ENCODE measurements at regions of chr6 and their contacts with region 1.

Region 1: DNA sequence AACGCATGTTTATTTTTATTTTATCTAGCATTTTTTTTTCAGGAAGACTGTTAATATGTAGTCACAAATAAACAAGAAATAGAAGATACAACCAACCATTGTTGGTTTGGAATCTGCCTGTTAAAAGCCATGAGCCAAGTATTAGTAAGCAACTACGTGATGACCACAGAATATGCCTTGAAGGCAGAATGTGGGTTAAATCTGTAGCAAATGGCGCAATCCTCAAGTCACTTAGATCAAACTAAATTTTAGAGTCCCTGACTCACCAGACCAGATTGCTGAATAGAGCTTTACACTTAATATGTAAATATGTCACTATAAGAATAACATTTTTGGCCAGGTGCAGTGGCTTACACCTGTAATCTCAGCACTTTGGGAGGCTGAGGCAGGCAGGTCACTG is 800.1 kb upstream of the CITED2 start:
- DNase-seq: peak; percentile 88
- H3K4me3 ChIP-seq: no peak overlapping the region
- H3K27ac ChIP-seq: no peak overlapping the region
- H3K27me3 ChIP-seq: no peaks in the 10 kb centered on the region
- CTCF ChIP-seq: no peak

Region 2: GRCh38 chr6:140052756-140053729 is 121.5 kb before region 1 on chr6:
- CTCF ChIA-PET with region 1: no interaction called
- POLR2A ChIA-PET with region 1: interaction called, 11 read pairs
- DNase-seq: no peak
- H3K4me3 ChIP-seq: no peak overlapping the region
- H3K27ac ChIP-seq: no peak overlapping the region
- H3K27me3 ChIP-seq: no peaks in the 10 kb centered on the region
- CTCF ChIP-seq: peak; percentile 49

Region 3: GRCh38 chr6:140566781-140567231 is 392.3 kb after region 1 on chr6:
- CTCF ChIA-PET with region 1: no interaction called
- POLR2A ChIA-PET with region 1: interaction called, 10 read pairs
- DNase-seq: no peak
- H3K4me3 ChIP-seq: no peak overlapping the region
- H3K27ac ChIP-seq: no peak overlapping the region
- H3K27me3 ChIP-seq: no peaks in the 10 kb centered on the region
- CTCF ChIP-seq: no peak

Measured in AG04450 (cell line).